ENCODE measurements at regions of chr5 and their contacts with region 1.

Region 1: DNA sequence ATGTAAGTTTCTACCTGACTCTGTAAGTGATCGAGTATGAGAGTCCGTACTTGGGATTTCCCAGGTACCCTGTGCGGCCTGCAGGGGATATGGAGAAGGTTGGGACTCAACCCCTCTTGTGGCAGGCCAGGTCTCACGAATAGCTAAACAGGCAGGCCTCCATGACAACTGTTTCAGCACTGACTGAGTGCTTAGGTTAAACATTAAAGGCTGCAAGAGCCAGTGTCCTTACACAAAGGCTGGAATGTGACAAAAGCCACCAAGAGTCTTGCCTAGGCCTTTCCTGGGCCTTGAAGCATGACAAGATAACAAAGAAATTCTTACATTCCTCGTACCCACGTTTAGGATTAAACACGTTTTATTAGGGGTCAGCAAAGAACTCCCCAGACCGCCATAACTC is 58.6 kb downstream of the THBS4 start:
- DNase-seq: no peak
- ATAC-seq: no peak

Region 2: GRCh38 chr5:79816014-79816413 is 277.8 kb before region 1 on chr5:
- intact Hi-C with region 1: no loop called
- DNase-seq: no peak
- ATAC-seq: no peak

Region 3: DNA sequence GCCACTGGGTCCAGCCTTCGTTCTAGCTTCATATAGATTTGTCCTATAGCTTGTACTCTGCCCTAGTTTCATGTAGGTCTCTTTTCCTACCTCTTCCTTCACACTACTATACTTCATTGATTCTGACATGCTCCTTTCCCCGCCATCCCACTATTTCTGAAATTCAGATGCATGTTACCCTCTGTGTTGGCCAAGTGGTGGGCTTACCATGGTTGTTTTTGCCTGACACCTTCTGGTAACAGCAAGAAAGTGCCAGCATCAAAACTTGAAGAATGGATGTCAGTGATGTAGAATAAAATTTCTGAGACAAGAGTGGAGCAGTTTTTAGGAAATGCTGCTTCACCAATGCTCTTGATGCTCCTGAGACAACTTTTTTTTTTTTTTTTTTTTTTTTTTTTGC is 181.6 kb after region 1 on chr5:
- intact Hi-C with region 1: loop called (anchors 10 kb)
- DNase-seq: no peak
- ATAC-seq: peak; percentile 65

Region 4: DNA sequence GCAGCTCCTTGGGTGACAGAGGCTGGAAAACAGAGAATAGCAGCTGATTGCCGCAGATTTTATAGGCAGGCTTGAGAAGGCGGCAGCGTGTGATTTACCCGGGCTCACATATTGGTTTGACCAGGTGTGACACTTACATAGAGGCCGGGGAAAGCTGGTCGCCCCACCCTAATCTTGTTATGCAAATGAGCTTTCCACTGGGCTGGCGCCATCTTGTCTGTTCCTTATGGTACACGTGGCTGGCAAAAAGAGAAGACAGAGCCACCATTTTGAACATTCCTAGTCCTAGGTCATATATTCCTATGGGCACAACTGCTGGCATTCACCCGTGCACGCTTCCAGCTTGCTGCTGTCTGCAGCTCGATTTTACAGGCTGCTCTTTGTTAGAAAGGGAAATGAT is 214.7 kb after region 1 on chr5:
- intact Hi-C with region 1: loop called (anchors 10 kb)
- DNase-seq: no peak
- ATAC-seq: no peak